ENCODE measurements at regions of chr6 and their contacts with region 1.

Region 1: DNA sequence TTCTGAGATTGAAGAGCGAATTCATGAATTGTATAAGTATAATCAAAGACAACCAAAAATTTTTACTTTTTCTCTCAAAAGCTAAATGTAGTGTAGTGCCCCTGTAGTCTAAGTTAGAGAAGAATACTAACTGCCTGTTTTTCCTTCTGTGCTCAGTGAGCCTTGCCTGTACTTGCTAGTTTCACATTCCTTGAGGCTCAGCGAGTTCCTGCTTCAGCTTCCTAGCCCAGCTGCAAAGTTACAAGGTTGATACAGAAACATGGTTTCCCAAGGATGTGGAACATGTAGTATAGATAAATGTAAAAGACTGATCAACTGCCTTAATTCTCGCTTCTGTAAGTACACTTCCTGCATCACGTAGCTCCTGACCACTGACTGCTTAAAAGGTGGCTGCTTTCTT is 33.1 kb upstream of the SEC63 start:
- DNase-seq: no peak

Region 2: GRCh38 chr6:107977283-107977682 is 13.8 kb before region 1 on chr6:
- CTCF ChIA-PET with region 1: interaction called, 13 read pairs
- POLR2A ChIA-PET with region 1: no interaction called
- DNase-seq: no peak

Region 3: DNA sequence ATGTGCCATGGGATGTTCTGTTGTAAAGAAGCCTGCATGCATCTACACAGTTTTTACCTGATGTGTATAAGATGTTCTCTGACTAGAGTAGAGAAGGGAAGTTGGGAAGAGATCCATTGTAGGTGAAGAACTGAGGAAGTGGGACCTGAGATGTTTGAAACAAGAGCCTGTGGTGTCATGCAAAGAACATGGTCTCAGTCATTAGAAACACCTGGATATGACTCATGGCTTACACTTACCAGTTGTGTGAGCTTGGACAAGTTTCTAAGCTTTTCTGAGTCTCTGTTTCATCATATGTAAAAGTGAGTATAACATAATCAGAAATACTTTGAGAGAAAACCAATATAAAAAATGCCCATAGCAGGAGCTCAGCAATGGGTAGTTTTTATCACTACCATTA is 18.8 kb after region 1 on chr6:
- CTCF ChIA-PET with region 1: no interaction called
- POLR2A ChIA-PET with region 1: no interaction called
- DNase-seq: no peak

Region 4: GRCh38 chr6:108302386-108302785 is 311.3 kb after region 1 on chr6:
- CTCF ChIA-PET with region 1: no interaction called
- POLR2A ChIA-PET with region 1: no interaction called
- DNase-seq: no peak